Mucosa of descending colon (tissue), 3 donors: ENCODE measurements at regions of chr14 and their contacts with region 1.

Region 1: GRCh38 chr14:50101417-50101816 is 15.0 kb downstream of the VCPKMT start:
- DNase-seq: peak in 2 of 3 donors; percentile 42 to 55
- ATAC-seq: peak; percentile 55
- H3K4me3 ChIP-seq: no peak overlapping the region
- H3K4me1 ChIP-seq: peaks cover 10% of the 10 kb centered on the region
- CTCF ChIP-seq: no peak

Region 2: GRCh38 chr14:49862089-49862673 is 239.2 kb before region 1 on chr14:
- intact Hi-C with region 1: loop called (anchors 5 kb)
- DNase-seq: peak; percentile 82 to 88 (median 84)
- ATAC-seq: peak; percentile 82
- H3K4me3 ChIP-seq: peak overlapping the region; percentile 12
- H3K4me1 ChIP-seq: peaks cover under 1% of the 10 kb centered on the region
- CTCF ChIP-seq: peak; percentile 98

Region 3: GRCh38 chr14:50045039-50045711 is 56.2 kb before region 1 on chr14:
- intact Hi-C with region 1: loop called in 1 of 2 experiments (anchors 2 kb)
- DNase-seq: peak; percentile 90 to 96 (median 90)
- ATAC-seq: peak; percentile 88
- H3K4me3 ChIP-seq: no peak overlapping the region
- H3K4me1 ChIP-seq: peaks cover 45% of the 10 kb centered on the region
- CTCF ChIP-seq: no peak

Region 4: DNA sequence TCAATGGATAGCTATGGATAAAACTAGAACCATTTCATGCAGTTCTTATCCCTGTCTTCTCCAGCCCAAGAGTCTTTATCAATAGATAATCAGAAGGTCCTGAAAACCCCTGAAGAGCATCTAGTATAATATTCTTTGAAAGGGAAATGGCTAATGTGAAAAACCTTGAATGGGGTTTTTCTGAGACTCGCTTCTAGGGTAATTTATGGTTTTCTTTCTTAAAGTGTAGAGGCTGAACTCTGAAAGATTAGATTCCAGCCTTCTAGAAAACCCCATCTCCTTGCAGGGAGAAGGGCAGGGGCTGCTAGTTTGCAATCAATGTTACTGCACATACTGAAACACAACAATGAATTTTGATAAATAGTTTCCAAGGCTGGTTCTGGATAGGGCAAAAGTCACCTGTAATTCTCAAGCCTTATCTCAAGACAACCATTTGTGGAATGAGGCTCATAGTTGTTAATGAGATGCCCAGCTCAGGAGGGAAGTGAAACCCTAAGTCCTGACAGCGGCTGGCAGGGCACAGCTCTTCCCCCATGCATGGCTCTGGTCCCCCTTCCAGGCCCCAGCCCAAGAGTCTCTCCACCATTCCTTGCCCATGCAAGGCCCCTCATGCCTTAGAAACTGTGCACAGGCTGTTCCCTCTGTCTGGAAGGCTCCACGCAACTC is 876.6 kb after region 1 on chr14:
- intact Hi-C with region 1: no loop called
- DNase-seq: no peak
- ATAC-seq: no peak
- H3K4me3 ChIP-seq: no peak overlapping the region
- H3K4me1 ChIP-seq: no peaks in the 10 kb centered on the region
- CTCF ChIP-seq: no peak